ENCODE measurements at regions of chr6 and their contacts with region 1.

Region 1: DNA sequence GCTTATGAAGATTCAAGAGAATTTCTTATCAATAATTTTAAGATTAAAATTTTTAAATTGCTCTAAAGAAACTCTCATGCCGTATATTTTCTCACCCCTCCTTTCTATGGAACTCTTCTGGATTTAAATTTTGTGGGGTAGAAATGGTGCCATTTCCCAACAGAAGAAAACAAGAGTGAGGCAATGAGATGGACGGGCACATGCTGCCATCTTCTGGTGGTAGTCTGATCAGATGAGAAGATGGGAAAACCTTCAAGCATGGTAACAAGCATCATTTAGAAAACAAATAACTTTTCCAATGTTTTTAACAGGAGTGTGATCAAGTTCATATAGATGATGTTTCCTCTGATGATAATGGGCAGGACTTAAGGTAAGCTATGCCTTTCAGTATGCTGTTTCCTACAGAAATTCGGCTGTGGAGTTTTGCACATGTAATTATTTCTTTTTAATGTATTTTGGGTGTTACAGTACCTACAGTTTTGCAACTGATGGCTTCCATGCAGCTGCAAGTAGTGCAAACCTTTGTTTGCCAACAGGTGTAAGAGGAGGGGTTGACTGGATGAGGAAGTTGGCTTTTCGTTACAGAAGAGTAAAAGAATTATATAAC is 271.4 kb downstream of the EYA4 start:
- DNase-seq: no peak
- ATAC-seq: peak; percentile 60
- H3K4me3 ChIP-seq: no peak overlapping the region
- H3K27ac ChIP-seq: no peak overlapping the region
- H3K4me1 ChIP-seq: no peaks in the 10 kb centered on the region
- H3K27me3 ChIP-seq: no peaks in the 10 kb centered on the region
- CTCF ChIP-seq: peak; percentile 39 to 66 (median 51); a peak in 5 of 6 replicates
- EP300 ChIP-seq: no peak
- POLR2A ChIP-seq: no peak
- RAD21 ChIP-seq: peak; percentile 75

Region 2: DNA sequence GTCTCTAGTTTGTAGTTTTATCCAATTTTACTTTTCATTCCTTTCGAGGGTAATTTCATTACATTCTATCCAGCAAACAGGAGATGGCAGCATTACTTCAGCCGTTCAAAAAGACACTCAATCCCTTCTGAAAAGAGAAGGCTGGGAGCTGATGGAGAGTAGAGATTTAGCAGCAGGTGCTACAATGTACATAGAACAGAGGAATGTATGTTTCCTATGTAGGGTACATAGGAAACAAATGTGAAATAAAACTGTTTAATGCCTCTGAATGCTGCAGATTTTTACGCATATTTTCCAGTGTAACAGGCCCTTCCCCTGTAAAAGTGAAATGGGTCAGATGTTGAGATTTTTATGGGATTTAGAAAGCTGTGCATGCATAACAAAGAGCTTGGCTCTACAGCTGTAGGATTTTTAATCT is 682.2 kb before region 1 on chr6:
- CTCF ChIA-PET with region 1: no interaction called
- POLR2A ChIA-PET with region 1: no interaction called
- RAD21 ChIA-PET with region 1: no interaction called
- SMC1A ChIA-PET with region 1: no interaction called
- in situ Hi-C with region 1: loop called (anchors 10 kb)
- intact Hi-C with region 1: loop called (anchors 2 kb)
- DNase-seq: no peak
- ATAC-seq: peak; percentile 55
- H3K4me3 ChIP-seq: no peak overlapping the region
- H3K27ac ChIP-seq: no peak overlapping the region
- H3K4me1 ChIP-seq: no peaks in the 10 kb centered on the region
- H3K27me3 ChIP-seq: no peaks in the 10 kb centered on the region
- CTCF ChIP-seq: peak; percentile 25 to 53 (median 32); a peak in 4 of 6 replicates
- EP300 ChIP-seq: no peak
- POLR2A ChIP-seq: no peak
- RAD21 ChIP-seq: peak; percentile 82

Region 3: GRCh38 chr6:133184798-133185372 is 327.6 kb before region 1 on chr6:
- CTCF ChIA-PET with region 1: interaction called, 4 read pairs
- POLR2A ChIA-PET with region 1: no interaction called
- RAD21 ChIA-PET with region 1: no interaction called
- SMC1A ChIA-PET with region 1: no interaction called
- in situ Hi-C with region 1: no loop called
- intact Hi-C with region 1: loop called (anchors 2 kb)
- DNase-seq: no peak
- ATAC-seq: no peak
- H3K4me3 ChIP-seq: no peak overlapping the region
- H3K27ac ChIP-seq: no peak overlapping the region
- H3K4me1 ChIP-seq: no peaks in the 10 kb centered on the region
- H3K27me3 ChIP-seq: no peaks in the 10 kb centered on the region; a peak in 1 of 4 replicates
- CTCF ChIP-seq: peak; percentile 31 to 47 (median 43); a peak in 3 of 6 replicates
- EP300 ChIP-seq: no peak
- POLR2A ChIP-seq: no peak
- RAD21 ChIP-seq: peak; percentile 27; the same call in 1 of the 2 replicates

Region 4: DNA sequence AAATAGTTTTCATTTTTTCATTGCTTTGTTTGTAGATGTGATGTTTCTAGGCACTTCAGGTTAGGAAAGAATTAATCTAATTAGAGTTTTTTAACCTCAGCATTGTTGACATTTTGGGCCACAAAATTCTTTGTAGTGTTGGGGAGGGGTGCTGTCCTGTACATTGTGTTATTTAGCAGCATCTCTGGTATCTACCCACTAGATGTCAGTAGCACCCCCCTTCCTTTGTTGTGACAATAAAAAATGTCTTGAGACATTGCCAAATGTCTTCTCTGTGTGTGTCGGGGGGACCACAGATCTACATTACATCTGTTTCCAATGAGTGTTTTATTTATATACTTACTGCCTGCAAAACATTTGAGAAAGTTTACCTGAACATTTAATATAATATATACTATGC is 225.7 kb before region 1 on chr6:
- CTCF ChIA-PET with region 1: no interaction called
- POLR2A ChIA-PET with region 1: no interaction called
- RAD21 ChIA-PET with region 1: no interaction called
- SMC1A ChIA-PET with region 1: no interaction called
- in situ Hi-C with region 1: no loop called
- intact Hi-C with region 1: loop called (anchors 10 kb)
- DNase-seq: no peak
- ATAC-seq: peak; percentile 44; the same call in 2 of the 3 replicates
- H3K4me3 ChIP-seq: no peak overlapping the region
- H3K27ac ChIP-seq: no peak overlapping the region
- H3K4me1 ChIP-seq: no peaks in the 10 kb centered on the region
- H3K27me3 ChIP-seq: no peaks in the 10 kb centered on the region; a peak in 1 of 4 replicates
- CTCF ChIP-seq: peak; percentile 16 to 40 (median 29); a peak in 4 of 6 replicates
- EP300 ChIP-seq: no peak
- POLR2A ChIP-seq: no peak
- RAD21 ChIP-seq: peak; percentile 27

Measured in GM12878 (cell line).